SK-N-SH (cell line): ENCODE measurements at regions of chr5 and their contacts with region 1.

Region 1: DNA sequence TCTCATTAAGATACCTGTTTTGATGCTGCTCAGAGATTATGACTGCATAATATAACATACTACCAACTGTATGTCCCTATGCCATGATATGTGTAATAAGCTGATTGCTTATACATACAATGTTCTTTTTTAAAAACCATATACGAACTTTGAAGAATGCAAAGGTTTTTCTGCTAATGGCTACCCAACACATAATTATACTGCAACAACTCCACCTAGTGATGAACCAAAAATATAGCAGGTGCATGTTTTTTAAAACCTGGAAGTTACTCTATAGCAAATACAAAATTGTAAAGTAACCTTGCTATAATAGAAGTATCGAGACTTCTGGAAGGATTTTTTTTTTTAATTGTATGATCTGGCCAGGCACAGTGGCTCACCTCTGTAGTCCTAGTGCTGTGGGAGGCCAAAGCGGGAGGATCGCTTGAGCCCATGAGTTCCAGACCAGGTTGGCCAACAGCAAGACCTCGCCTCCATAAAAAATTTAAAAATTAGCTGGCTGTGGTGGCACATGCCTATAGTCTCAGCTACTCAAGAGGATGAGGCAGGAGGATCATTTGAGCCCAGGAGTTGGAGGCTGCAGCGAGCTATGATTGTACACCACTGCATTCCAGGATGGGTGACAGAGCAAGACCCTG is 49.1 kb downstream of the HOMER1 start:
- DNase-seq: peak; percentile 39
- H3K4me3 ChIP-seq: no peak overlapping the region
- H3K27ac ChIP-seq: no peak overlapping the region
- H3K4me1 ChIP-seq: no peaks in the 10 kb centered on the region
- H3K27me3 ChIP-seq: no peaks in the 10 kb centered on the region
- CTCF ChIP-seq: peak; percentile 79
- EP300 ChIP-seq: no peak
- RAD21 ChIP-seq: peak; percentile 86

Region 2: GRCh38 chr5:79454043-79454442 is 10.8 kb before region 1 on chr5:
- CTCF ChIA-PET with region 1: interaction called, 10 read pairs
- POLR2A ChIA-PET with region 1: no interaction called
- DNase-seq: peak; percentile 6
- H3K4me3 ChIP-seq: no peak overlapping the region
- H3K27ac ChIP-seq: no peak overlapping the region
- H3K4me1 ChIP-seq: peaks cover 4 to 9% of the 10 kb centered on the region in 2 experiments; a peak in 3 of 4 replicates
- H3K27me3 ChIP-seq: no peaks in the 10 kb centered on the region
- CTCF ChIP-seq: no peak
- EP300 ChIP-seq: no peak
- RAD21 ChIP-seq: no peak

Region 3: DNA sequence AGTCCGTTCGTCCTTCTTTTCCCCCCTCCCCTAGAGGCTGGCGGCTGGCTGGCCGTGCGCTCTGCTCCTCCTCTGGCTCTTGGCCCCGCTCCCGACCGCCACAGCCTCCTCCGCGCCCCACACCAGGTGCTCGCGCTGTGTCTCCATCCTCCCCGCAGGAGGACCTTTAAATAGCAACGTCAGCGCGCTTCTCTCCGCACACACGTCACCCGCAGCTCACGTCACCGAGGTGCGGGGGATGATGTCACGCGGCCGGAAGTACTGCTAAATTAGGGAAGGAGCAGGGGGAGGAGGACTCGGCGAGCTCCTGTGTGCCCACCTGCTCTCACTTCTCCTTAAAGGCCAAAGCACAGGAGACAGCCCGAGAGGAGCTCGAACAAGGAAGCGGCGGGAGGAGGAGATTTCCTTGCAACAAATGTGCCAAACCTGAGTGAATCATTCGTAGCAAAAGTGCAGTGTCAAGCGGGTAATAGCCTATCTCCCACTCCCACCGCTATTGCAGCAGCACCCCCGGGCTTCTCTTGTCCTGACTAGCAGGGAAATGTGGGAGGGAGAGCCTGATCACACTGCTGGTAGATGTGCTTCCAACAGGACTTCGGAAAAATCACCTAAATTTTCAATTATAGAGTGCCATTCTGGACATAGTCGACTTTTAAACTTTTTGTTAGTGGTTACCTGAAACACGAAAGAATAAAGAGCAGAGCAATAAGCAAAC is 49.7 kb after region 1 on chr5:
- CTCF ChIA-PET with region 1: no interaction called
- POLR2A ChIA-PET with region 1: no interaction called
- DNase-seq: peak; percentile 89
- H3K4me3 ChIP-seq: peak overlapping the region; percentile 74 to 88
- H3K27ac ChIP-seq: peak overlapping the region; percentile 85 to 98
- H3K4me1 ChIP-seq: peaks cover 10 to 12% of the 10 kb centered on the region in 2 experiments; a peak in 3 of 4 replicates
- H3K27me3 ChIP-seq: no peaks in the 10 kb centered on the region
- CTCF ChIP-seq: no peak
- EP300 ChIP-seq: peak in 1 of 2 experiments; percentile 5; a peak in 1 of 4 replicates
- RAD21 ChIP-seq: no peak

Region 4: GRCh38 chr5:79590396-79590999 is 125.7 kb after region 1 on chr5:
- CTCF ChIA-PET with region 1: no interaction called
- POLR2A ChIA-PET with region 1: no interaction called
- DNase-seq: no peak
- H3K4me3 ChIP-seq: no peak overlapping the region
- H3K27ac ChIP-seq: no peak overlapping the region
- H3K4me1 ChIP-seq: no peaks in the 10 kb centered on the region
- H3K27me3 ChIP-seq: no peaks in the 10 kb centered on the region
- CTCF ChIP-seq: no peak
- EP300 ChIP-seq: no peak
- RAD21 ChIP-seq: no peak